ENCODE measurements at regions of chr15 and their contacts with region 1.

Region 1: GRCh38 chr15:100918034-100918689 is 995 bp upstream of the LRRK1 start:
- DNase-seq: peak; percentile 78
- ATAC-seq: peak; percentile 97
- H3K4me3 Mint-ChIP-seq: peak overlapping the region; percentile 64
- H3K27ac Mint-ChIP-seq: no peak overlapping the region
- H3K4me1 Mint-ChIP-seq: peaks cover 15% of the 10 kb centered on the region
- H3K27me3 Mint-ChIP-seq: peaks cover 66% of the 10 kb centered on the region
- CTCF ChIP-seq: peak; percentile 92

Region 2: GRCh38 chr15:100902436-100903167 is 15.6 kb before region 1 on chr15:
- CTCF ChIA-PET with region 1: interaction called, 21 read pairs
- POLR2A ChIA-PET with region 1: interaction called, 3 read pairs
- intact Hi-C with region 1: no loop called
- DNase-seq: no peak
- ATAC-seq: no peak
- H3K4me3 Mint-ChIP-seq: no peak overlapping the region
- H3K27ac Mint-ChIP-seq: no peak overlapping the region
- H3K4me1 Mint-ChIP-seq: no peaks in the 10 kb centered on the region
- H3K27me3 Mint-ChIP-seq: no peaks in the 10 kb centered on the region
- CTCF ChIP-seq: no peak

Region 3: DNA sequence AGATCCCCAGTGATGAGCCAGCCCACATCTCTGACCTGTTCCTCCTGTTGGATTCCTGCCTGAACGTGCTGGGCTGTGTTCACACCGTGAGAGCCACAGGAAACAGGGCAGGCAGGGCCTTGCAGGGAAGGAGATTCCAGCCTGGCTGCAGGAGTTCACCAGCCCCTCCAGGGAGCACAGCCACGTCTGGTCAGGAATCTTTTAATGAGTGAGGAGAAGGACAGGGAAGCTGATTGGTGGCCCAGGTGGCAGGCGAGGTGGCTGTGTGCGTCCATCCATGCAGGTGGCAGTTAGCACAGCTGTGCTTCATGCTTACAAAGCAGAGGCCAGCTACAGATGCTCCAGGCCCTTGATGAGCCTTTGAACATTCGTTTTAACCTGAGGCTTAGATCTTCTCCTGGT is 11.5 kb after region 1 on chr15:
- CTCF ChIA-PET with region 1: interaction called, 26 read pairs
- POLR2A ChIA-PET with region 1: no interaction called
- intact Hi-C with region 1: no loop called
- DNase-seq: no peak
- ATAC-seq: no peak
- H3K4me3 Mint-ChIP-seq: no peak overlapping the region
- H3K27ac Mint-ChIP-seq: no peak overlapping the region
- H3K4me1 Mint-ChIP-seq: no peaks in the 10 kb centered on the region
- H3K27me3 Mint-ChIP-seq: peaks cover 1% of the 10 kb centered on the region
- CTCF ChIP-seq: no peak

Region 4: GRCh38 chr15:101000271-101000681 is 82.1 kb after region 1 on chr15:
- CTCF ChIA-PET with region 1: interaction called, 243 read pairs
- POLR2A ChIA-PET with region 1: no interaction called
- intact Hi-C with region 1: no loop called
- DNase-seq: no peak
- ATAC-seq: no peak
- H3K4me3 Mint-ChIP-seq: no peak overlapping the region
- H3K27ac Mint-ChIP-seq: no peak overlapping the region
- H3K4me1 Mint-ChIP-seq: no peaks in the 10 kb centered on the region
- H3K27me3 Mint-ChIP-seq: peaks cover 2% of the 10 kb centered on the region
- CTCF ChIP-seq: no peak

Measured in activated CD8-positive, alpha-beta T cell treated with anti-CD3 and anti-CD28 coated beads for 36 hours (primary cell).